ENCODE measurements at regions of chr9 and their contacts with region 1.

Region 1: GRCh38 chr9:127980706-127981558 is at the start of gene EEIG1:
- DNase-seq: peak; percentile 99
- ATAC-seq: peak; percentile 82
- H3K4me3 Mint-ChIP-seq: peak within 1 kb of the TSS; percentile 94
- H3K27ac Mint-ChIP-seq: peak within 1 kb of the TSS; percentile 94
- H3K4me1 Mint-ChIP-seq: peaks cover 72% of the 10 kb centered on the region
- H3K27me3 Mint-ChIP-seq: no peaks in the 10 kb centered on the region
- CTCF ChIP-seq: no peak
- total RNA-seq, gene EEIG1: 65.8 and 88.1 TPM in 2 replicates

Region 2: GRCh38 chr9:126830827-126831226 is 1150.1 kb before region 1 on chr9:
- CTCF ChIA-PET with region 1: no interaction called
- POLR2A ChIA-PET with region 1: no interaction called
- intact Hi-C with region 1: no loop called
- DNase-seq: no peak
- ATAC-seq: no peak
- H3K4me3 Mint-ChIP-seq: no peak overlapping the region
- H3K27ac Mint-ChIP-seq: no peak overlapping the region
- H3K4me1 Mint-ChIP-seq: peaks cover 28% of the 10 kb centered on the region
- H3K27me3 Mint-ChIP-seq: no peaks in the 10 kb centered on the region
- CTCF ChIP-seq: no peak

Region 3: DNA sequence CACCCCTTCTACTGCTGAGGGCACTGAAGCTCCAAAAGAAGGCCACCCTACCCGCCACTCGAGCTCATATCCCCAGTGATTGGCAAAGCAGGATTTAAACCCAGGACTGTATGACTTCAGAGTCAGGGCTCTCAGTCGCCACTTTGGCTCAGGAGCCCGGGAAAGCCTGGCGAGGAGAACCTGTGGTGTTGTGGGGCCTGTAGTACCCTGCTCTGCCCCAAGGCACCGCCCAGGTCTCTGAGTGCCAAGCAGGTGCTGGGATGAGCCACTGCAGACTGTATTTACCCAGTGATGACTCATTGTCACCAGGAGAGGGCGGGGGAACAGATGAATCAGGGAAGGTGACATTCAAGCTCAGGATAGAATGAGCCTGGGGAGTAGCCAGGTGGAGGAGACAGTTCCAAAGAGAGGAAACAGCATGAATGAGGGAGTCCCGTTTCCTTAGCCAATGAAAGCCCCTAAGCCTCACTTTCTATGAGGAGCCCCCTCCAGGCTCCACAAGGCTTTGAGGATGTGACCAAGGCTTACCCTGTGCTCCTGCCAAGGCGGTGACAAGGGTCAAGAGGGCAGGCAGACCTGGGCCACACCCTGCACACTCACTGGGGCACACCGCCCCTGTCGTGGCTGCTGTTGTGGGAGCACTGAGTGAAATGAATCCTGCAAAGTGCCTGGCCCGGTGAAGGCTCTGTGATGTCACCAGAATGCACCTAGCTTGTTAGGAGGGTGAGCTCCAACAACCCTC is 25.5 kb before region 1 on chr9:
- CTCF ChIA-PET with region 1: interaction called, 33 read pairs
- POLR2A ChIA-PET with region 1: interaction called, 26 read pairs
- intact Hi-C with region 1: no loop called
- DNase-seq: no peak
- ATAC-seq: peak; percentile 99
- H3K4me3 Mint-ChIP-seq: no peak overlapping the region
- H3K27ac Mint-ChIP-seq: peak overlapping the region; percentile 79
- H3K4me1 Mint-ChIP-seq: peaks cover 61% of the 10 kb centered on the region
- H3K27me3 Mint-ChIP-seq: no peaks in the 10 kb centered on the region
- CTCF ChIP-seq: no peak

Region 4: DNA sequence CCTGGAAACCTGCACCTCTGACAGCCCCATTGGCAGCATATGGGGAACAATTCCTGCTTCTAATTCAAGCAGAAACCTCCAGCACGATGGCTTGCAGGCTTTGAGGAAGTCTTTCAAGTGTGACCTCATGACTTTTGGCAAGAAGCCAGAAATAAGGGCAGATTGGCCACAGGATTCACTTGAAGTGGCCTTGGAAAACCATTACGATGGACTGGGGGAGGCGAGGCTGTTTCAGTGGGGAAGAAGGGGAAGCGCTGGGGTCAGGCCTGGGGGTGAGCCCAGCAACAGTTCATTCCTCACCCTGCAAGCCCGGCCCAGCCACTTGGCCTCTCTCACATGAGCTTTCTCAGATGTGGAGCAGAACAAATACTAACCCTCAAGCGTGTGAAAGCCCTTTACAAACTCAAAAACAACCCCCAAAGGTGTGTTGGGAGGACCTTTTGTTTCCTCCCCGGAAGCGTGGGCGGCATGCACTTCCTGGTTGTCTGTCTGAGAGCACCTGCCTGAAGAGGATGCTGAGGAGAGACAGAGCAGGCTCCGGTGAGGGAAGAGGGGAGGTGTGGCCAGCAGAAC is 26.7 kb after region 1 on chr9:
- CTCF ChIA-PET with region 1: no interaction called
- POLR2A ChIA-PET with region 1: interaction called, 28 read pairs
- intact Hi-C with region 1: loop called (anchors 2 kb)
- DNase-seq: peak; percentile 51
- ATAC-seq: peak; percentile 78
- H3K4me3 Mint-ChIP-seq: peak overlapping the region; percentile 49
- H3K27ac Mint-ChIP-seq: peak overlapping the region; percentile 94
- H3K4me1 Mint-ChIP-seq: peaks cover 72% of the 10 kb centered on the region
- H3K27me3 Mint-ChIP-seq: no peaks in the 10 kb centered on the region
- CTCF ChIP-seq: no peak

Region 5: DNA sequence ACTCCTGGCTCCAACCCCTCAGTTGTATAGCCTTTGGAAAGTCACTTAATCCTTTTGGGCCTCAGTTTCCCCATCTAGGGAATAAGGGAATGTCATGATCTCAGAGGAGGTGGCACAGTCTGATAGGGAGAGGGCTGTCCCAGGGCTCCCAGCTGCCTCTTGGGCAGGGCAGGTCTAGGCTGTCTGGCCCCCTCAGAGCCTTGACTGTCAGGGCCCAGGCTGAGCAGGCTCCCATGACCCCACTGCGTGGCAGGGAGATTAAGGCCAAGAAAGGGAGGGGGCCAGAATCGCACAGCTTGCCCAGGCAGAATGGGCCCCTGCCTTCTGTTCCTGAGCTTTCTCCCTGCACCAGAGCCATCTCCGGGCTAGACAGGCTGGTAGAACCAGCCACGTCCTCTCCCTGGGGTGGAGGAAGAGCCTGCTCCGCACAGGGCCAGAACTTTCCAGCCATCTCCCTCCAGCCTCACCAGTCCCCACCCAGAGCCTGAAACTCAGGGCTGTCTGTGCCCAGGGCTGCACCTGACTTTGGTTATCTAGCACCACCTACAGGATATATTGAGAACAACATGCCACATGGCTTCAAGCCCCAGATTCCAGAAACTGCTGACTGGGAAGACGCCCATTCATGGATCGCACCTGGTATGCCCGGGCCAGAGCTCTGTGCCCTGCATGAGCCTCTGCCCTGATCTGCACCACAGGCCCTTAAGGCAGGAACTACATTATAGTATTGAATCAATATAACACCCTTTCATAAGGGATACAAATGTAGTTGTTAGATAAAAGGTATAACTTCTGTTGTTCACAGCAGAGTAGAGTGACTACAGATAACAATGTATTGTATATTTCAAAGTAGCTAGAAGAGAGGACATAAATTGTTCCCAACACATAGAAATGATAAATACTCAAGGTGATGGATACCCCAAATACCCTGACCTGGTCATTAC is 54.2 kb after region 1 on chr9:
- CTCF ChIA-PET with region 1: interaction called, 29 read pairs
- POLR2A ChIA-PET with region 1: interaction called, 78 read pairs
- intact Hi-C with region 1: loop called (anchors 1 kb)
- DNase-seq: peak; percentile 42
- ATAC-seq: peak; percentile 83
- H3K4me3 Mint-ChIP-seq: no peak overlapping the region
- H3K27ac Mint-ChIP-seq: peak overlapping the region; percentile 75
- H3K4me1 Mint-ChIP-seq: peaks cover 34% of the 10 kb centered on the region
- H3K27me3 Mint-ChIP-seq: no peaks in the 10 kb centered on the region
- CTCF ChIP-seq: peak; percentile 68

Region 6: DNA sequence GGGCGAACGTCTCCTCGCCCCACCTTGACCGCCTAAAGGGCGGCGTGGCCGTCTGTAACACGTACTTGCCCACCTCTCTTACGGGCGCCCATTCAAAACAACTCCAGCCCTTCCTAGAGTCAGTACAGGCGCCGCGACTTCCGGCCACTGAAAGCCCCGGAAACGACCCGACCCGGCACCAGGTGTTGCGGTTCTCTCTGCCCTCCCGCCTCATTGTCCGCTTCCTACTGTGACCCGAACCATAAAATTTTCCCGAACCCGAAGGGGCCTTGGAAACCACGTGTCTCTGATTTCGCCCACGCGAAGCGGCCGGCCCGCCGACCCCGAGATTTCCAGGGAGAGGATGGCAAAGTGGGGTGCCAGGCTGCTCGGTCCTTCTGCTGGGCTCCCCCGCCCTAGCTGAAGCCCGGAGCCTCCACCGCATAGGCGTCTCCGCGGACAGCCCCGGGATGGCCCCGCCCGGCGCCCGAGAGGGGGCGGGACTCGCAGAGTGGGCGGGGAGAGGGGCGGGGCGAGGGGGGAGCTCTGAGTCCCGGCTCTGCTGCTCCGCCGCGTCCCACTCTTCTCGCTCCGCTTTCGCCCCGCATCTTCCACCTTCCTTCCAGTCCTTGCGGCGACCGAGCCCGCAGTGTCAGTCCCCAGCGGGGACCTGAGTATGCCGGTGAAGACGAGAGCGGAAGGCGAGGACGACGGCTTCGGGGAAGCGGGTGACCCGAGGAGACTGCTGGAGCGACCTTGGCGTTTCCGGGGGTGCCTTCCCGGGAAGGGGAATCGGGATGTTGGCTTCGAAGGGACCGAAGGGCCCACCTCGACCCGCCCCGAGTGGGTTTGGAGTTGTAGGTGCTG is 147.3 kb after region 1 on chr9:
- CTCF ChIA-PET with region 1: no interaction called
- POLR2A ChIA-PET with region 1: no interaction called
- intact Hi-C with region 1: loop called (anchors 1 kb)
- DNase-seq: peak; percentile 90
- ATAC-seq: peak; percentile 79
- H3K4me3 Mint-ChIP-seq: peak overlapping the region; percentile 97
- H3K27ac Mint-ChIP-seq: peak overlapping the region; percentile 99
- H3K4me1 Mint-ChIP-seq: peaks cover 34% of the 10 kb centered on the region
- H3K27me3 Mint-ChIP-seq: peaks cover 3% of the 10 kb centered on the region
- CTCF ChIP-seq: no peak

Region 7: GRCh38 chr9:128218518-128219389 is 237.8 kb after region 1 on chr9:
- CTCF ChIA-PET with region 1: no interaction called
- POLR2A ChIA-PET with region 1: no interaction called
- intact Hi-C with region 1: no loop called
- DNase-seq: peak; percentile 87
- ATAC-seq: peak; percentile 97
- H3K4me3 Mint-ChIP-seq: peak overlapping the region; percentile 81
- H3K27ac Mint-ChIP-seq: peak overlapping the region; percentile 19
- H3K4me1 Mint-ChIP-seq: peaks cover 11% of the 10 kb centered on the region
- H3K27me3 Mint-ChIP-seq: peaks cover 5% of the 10 kb centered on the region
- CTCF ChIP-seq: no peak

Measured in activated B cell treated with CpG ODN at 0.5 μM for 24 hours (primary cell).